ENCODE measurements at regions of chr11 and their contacts with region 1.

Region 1: DNA sequence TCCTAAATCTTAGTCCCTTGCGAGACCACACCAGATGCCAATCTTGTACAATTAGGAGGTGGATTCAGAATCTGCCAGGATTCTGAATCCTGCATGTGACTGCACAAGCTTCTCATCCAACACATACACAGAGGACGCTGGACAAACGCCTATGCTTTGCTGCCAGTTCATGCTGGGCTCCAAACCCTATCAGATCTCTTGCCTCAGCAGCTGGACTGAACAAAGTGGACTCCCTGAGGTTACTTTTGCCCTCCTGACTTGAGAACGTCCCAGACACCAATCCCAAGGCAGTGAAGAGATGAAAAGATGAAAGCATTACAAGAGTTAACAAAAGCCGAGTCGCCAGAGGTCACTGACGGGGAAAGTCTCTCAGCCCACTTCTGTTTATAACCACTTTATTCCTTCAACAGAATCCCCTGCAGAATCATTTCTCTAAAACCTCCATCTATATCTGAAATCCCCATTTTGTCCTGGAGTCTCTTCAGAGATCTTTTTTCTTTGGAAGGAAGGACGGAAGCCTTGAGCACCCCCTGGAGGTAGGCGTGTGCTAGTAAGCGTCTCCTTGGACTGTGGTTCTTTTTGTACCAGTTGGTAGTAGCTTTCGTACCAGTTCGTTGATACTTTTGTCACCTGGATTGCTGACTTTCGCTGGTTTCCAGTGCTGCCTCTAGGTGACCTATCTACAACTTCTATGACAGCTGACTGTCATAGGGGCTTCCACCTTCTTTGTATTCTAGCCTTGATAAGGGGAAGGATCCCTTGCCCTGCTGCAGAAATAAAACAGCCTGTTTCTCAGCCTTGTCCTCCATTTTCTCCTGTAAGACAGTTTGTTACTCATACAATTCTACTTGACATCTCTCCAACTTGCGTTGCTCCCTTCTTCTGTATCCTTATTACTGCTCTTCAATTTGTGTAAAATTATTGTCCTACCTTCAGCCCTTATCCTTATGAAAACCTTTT is 26.1 kb upstream of the EED start:
- DNase-seq: peak; percentile 37 to 44
- ATAC-seq: peak; percentile 87 to 95
- H3K4me3 ChIP-seq: peak overlapping the region; percentile 30 to 44 (median 32)
- H3K27ac ChIP-seq: no peak overlapping the region
- H3K4me1 ChIP-seq: peaks cover 5 to 10% of the 10 kb centered on the region in 2 donors
- H3K27me3 ChIP-seq: no peaks in the 10 kb centered on the region
- CTCF ChIP-seq: peak; percentile 74 to 91 (median 86)
- POLR2A ChIP-seq: no peak

Region 2: GRCh38 chr11:85595285-85595884 is 623.0 kb before region 1 on chr11:
- in situ Hi-C with region 1: no loop called
- intact Hi-C with region 1: loop called (anchors 10 kb)
- DNase-seq: no peak
- ATAC-seq: no peak
- H3K4me3 ChIP-seq: no peak overlapping the region
- H3K27ac ChIP-seq: no peak overlapping the region
- H3K4me1 ChIP-seq: no peaks in the 10 kb centered on the region
- H3K27me3 ChIP-seq: no peaks in the 10 kb centered on the region
- CTCF ChIP-seq: peak; percentile 40 to 78 (median 67)
- POLR2A ChIP-seq: no peak

Region 3: DNA sequence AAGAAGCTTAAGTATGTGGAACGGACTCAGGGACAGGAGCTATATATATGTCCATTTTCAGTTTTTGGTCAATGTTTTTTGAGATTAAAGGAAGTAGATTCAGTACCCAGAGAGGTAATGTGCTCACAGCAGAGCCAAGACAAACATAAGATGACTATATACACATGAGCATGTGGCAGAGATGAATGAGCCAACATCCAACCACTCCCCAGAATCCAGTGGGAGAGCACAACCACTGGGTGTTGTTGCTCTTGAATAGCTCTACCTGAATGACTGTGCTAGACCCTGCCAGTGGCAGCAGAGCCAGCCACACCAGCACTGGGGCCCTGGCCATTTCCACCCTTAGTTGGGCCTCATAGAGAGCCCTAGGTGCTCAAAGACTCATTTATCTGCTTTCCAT is 396.8 kb before region 1 on chr11:
- in situ Hi-C with region 1: no loop called
- intact Hi-C with region 1: no loop called
- DNase-seq: no peak
- ATAC-seq: no peak
- H3K4me3 ChIP-seq: no peak overlapping the region
- H3K27ac ChIP-seq: no peak overlapping the region
- H3K4me1 ChIP-seq: no peaks in the 10 kb centered on the region
- H3K27me3 ChIP-seq: no peaks in the 10 kb centered on the region
- CTCF ChIP-seq: no peak
- POLR2A ChIP-seq: no peak

Region 4: DNA sequence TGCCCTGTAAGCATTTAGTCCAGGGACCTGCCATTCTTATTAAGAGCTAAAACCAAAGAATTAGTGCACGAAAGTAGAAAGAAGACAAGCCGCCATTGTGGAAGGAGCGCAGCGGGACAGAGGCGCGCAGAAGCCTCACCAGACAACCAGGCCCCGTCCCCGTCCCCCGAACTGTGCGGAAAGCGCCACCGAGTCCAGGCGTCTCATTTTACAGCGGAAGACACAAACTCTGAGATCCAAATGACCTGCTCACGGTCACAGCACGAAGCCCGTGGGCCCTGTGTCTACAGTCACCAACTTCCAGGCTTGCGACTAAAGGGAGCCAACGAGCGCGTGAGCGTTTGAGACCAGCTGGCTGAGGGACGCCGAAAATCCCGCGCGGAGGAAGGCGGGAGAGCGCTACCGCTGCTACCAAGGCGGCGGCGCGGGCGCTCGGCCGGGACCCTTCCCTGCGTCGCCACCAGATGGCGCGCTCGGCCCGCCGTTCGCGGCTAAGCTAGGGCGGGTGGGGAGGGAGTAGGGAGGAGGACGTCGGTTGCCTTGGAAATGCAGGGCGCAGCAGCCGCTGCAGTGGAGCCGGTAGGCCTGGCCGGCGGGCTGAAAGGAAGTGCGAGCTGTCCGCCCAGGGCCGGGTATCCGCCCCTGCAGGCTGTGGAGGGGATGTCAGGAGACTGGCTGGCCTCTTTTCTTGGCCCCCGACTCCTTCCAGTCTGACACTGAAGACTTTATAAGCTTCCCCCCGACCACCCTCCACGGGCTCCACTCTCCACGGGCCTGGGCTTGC is 363.7 kb before region 1 on chr11:
- in situ Hi-C with region 1: loop called in 1 of 4 experiments (anchors 10 kb)
- intact Hi-C with region 1: loop called (anchors 1 kb)
- DNase-seq: peak; percentile 68 to 85
- ATAC-seq: peak; percentile 94 to 96
- H3K4me3 ChIP-seq: peak overlapping the region; percentile 54 to 71 (median 61)
- H3K27ac ChIP-seq: peak overlapping the region; percentile 78 to 91 (median 80)
- H3K4me1 ChIP-seq: peaks cover 4 to 5% of the 10 kb centered on the region in 2 donors
- H3K27me3 ChIP-seq: no peaks in the 10 kb centered on the region
- CTCF ChIP-seq: peak; percentile 84 to 99 (median 93)
- POLR2A ChIP-seq: peak in 1 of 2 donors; percentile 35

Region 5: DNA sequence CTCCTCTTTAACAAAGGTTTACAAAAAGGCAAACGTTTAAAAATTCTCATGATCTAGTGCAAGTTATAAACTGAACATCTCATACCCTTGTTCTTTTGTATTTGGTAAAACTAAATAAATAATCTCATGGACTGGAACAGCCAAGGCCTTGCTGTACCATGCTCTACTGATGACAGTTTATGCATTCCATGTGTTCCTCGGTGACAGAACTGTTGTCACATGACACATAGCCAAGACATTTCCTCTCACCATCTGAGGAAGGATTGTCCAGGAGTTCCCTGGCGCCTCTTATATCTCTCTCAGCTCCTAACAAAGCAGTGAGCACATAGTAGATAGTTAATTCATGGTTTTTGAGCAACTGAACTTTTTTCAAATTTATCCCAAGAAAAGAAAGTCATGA is 350.7 kb before region 1 on chr11:
- in situ Hi-C with region 1: loop called in 2 of 4 experiments (anchors 10 kb)
- intact Hi-C with region 1: no loop called
- DNase-seq: no peak
- ATAC-seq: no peak
- H3K4me3 ChIP-seq: no peak overlapping the region
- H3K27ac ChIP-seq: no peak overlapping the region
- H3K4me1 ChIP-seq: no peaks in the 10 kb centered on the region
- H3K27me3 ChIP-seq: no peaks in the 10 kb centered on the region
- CTCF ChIP-seq: no peak
- POLR2A ChIP-seq: no peak

Region 6: GRCh38 chr11:85941380-85941973 is 276.9 kb before region 1 on chr11:
- in situ Hi-C with region 1: loop called (anchors 5 to 10 kb)
- intact Hi-C with region 1: loop called (anchors 1 kb)
- DNase-seq: peak; percentile 32 to 45
- ATAC-seq: peak; percentile 70 to 81
- H3K4me3 ChIP-seq: no peak overlapping the region
- H3K27ac ChIP-seq: no peak overlapping the region
- H3K4me1 ChIP-seq: peaks cover 0 to 9% of the 10 kb centered on the region in 2 donors
- H3K27me3 ChIP-seq: no peaks in the 10 kb centered on the region
- CTCF ChIP-seq: peak; percentile 63 to 79 (median 73)
- POLR2A ChIP-seq: no peak

Region 7: DNA sequence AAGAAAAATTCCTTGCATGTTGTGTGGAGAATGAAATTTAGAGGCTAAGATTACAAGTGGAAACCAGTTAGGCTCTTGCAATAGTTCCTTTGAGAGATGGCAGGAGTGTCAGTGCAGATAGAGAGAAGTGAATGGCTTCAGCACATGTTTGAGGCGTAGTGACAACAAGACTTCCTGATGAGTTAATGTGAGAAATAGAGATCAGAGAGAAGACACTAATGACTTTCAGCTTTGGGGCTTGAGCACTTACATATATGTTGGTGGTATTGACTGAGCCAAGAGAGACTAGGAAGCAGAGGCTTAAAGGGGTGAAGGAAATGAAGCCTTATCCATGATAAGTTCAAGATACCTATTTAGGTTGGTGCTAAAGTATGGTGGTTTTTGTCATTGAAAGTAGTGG is 93.6 kb before region 1 on chr11:
- in situ Hi-C with region 1: no loop called
- intact Hi-C with region 1: no loop called
- DNase-seq: no peak
- ATAC-seq: no peak
- H3K4me3 ChIP-seq: no peak overlapping the region
- H3K27ac ChIP-seq: no peak overlapping the region
- H3K4me1 ChIP-seq: no peaks in the 10 kb centered on the region
- H3K27me3 ChIP-seq: no peaks in the 10 kb centered on the region
- CTCF ChIP-seq: no peak
- POLR2A ChIP-seq: no peak

Region 8: DNA sequence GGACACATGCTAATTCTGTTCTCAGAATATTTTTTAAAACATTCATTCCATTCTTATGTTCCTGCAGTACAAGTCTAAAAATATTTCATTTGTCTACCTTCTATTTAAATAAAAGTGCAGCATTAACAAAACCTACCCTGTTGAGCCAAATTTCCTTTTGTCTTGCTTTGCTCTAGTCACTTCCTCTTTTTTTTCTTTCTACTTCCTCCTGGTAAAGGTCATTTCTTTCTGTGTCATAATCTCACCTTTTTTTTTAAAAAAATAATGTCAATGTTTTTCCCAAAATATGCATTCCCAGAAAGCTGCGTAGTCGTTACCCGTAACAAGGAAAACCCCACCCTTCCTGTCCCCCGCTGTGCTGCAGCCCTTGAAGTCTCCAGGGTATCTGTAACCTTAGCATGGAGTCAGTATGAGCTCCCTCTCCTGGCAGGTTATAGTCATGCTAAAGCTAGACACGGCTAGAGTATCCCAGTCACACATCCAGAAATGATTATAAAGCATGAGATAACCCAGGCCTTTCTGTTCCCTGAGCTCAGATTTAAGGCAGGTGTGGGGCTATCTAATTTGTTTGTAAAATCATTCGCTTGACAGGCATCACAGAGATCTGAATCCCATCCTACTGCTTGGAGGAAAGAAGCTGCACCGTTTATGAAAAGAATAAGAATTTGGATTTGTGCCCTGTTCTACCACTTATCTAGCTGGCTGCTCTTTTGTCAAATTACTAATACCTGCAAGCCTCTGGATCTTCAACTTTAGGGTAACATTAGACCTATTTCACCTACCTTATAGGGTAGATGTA is 24.9 kb before region 1 on chr11:
- in situ Hi-C with region 1: no loop called
- intact Hi-C with region 1: loop called (anchors 1 kb)
- DNase-seq: peak; percentile 50 to 57
- ATAC-seq: peak; percentile 99 to 100
- H3K4me3 ChIP-seq: peak overlapping the region; percentile 22 to 33 (median 33)
- H3K27ac ChIP-seq: peak overlapping the region; percentile 43 to 56 (median 52)
- H3K4me1 ChIP-seq: peaks cover 8 to 12% of the 10 kb centered on the region in 2 donors
- H3K27me3 ChIP-seq: no peaks in the 10 kb centered on the region
- CTCF ChIP-seq: peak; percentile 69 to 82 (median 79)
- POLR2A ChIP-seq: no peak